Activated CD4-positive, alpha-beta memory T cell treated with anti-CD3 and anti-CD28 coated beads, Interleukin-2, amount 10 ng/mL, durations not matched to agents 7 days and 5 days (primary cell): ENCODE measurements at regions of chr9 and their contacts with region 1.

Region 1: DNA sequence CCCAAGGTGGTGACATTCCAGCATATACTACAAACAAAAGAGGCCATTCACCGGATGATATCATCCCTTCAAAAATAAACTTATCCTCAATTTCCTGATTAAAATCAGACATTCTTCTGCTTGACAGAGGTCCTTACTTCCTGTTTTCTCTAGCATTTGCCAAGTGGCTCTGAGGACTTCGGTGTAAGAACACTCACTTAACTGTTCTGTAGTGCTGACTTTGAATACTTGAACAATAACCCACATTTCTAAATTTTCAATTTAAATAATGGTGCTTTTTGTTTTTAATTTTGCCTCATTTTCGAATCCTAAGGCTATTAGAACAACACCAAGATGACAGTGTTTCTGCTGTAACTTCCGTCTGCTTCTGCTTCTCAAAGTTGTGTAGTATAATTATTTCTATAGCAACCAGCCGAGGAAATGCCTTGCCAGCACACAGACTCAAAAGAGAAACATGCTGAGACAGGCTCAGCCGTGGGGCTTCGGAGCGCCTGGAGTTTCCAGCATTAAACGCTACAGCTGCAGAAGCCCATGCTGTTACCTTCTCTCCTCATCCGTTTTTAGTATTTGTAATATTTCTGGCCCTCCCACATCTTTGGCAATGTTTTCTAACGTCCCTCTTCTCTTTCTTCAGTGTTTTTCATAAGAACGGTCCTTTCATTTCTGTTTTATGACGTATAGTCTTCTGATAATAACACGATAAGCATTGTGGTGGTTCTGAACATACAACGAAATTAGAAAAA is 19.5 kb upstream of the ANXA1 start:
- DNase-seq: peak; percentile 81
- H3K4me3 Mint-ChIP-seq: peak overlapping the region; percentile 80
- H3K27ac Mint-ChIP-seq: peak overlapping the region; percentile 93
- H3K4me1 Mint-ChIP-seq: peaks cover 39% of the 10 kb centered on the region
- H3K27me3 Mint-ChIP-seq: no peaks in the 10 kb centered on the region

Region 2: GRCh38 chr9:73067074-73067473 is 65.1 kb before region 1 on chr9:
- CTCF ChIA-PET with region 1: no interaction called
- POLR2A ChIA-PET with region 1: no interaction called
- DNase-seq: no peak
- H3K4me3 Mint-ChIP-seq: no peak overlapping the region
- H3K27ac Mint-ChIP-seq: no peak overlapping the region
- H3K4me1 Mint-ChIP-seq: no peaks in the 10 kb centered on the region
- H3K27me3 Mint-ChIP-seq: peaks cover 16% of the 10 kb centered on the region

Region 3: DNA sequence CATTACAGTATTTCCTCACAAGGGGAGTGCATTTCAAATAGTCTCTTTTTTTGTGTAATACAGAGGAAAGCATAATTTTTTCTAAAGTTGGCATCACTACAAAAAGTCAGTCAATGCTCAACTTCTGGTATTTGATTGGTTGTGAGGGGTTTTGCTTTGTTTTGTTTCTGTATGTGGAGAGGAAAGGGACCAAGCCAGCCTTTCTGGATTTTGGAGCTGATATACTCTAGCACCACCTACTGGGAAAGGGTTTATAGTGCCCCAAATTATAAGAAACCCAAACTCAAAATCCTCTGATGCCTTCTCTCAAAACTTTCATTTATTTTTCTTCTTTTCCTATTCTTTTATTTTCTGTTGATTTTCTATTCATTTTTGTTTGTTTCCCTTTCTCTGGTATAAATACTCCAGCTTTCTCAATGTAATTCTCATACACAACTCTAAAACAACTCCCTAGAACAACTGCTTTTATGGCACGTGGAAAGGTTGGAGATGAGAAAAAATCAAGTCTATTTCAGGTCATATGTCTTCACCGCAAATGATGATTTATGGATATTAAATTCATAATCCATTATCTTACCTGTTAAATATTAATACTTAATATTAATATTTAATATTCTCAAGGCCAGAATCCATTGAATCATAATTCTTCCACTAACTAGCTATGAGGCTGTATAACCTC is 50.1 kb before region 1 on chr9:
- CTCF ChIA-PET with region 1: no interaction called
- POLR2A ChIA-PET with region 1: no interaction called
- DNase-seq: no peak
- H3K4me3 Mint-ChIP-seq: no peak overlapping the region
- H3K27ac Mint-ChIP-seq: no peak overlapping the region
- H3K4me1 Mint-ChIP-seq: no peaks in the 10 kb centered on the region
- H3K27me3 Mint-ChIP-seq: peaks cover 18% of the 10 kb centered on the region

Region 4: GRCh38 chr9:73149371-73150067 is 17.3 kb after region 1 on chr9:
- CTCF ChIA-PET with region 1: interaction called, 3 read pairs
- POLR2A ChIA-PET with region 1: interaction called, 22 read pairs
- DNase-seq: no peak
- H3K4me3 Mint-ChIP-seq: peak overlapping the region; percentile 24
- H3K27ac Mint-ChIP-seq: peak overlapping the region; percentile 88
- H3K4me1 Mint-ChIP-seq: peaks cover 61% of the 10 kb centered on the region
- H3K27me3 Mint-ChIP-seq: no peaks in the 10 kb centered on the region

Region 5: DNA sequence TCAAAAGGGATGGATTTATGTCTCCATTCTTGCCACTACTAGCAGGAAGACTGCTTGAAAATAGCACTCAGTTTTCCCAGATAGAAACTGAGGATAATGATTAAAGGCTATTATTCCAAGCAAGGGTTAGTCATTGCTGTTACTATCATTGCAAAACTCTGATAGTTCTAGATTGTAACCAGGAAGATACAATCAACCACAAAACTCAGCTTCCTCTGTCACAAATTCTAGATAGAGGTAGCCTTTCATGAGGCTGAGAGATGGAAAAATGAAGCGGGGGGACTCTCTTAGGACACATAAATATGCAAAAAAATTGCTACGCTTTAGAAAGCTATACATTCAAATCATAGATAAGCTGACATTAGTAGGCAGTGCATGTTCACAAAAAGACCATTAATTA is 22.6 kb after region 1 on chr9:
- CTCF ChIA-PET with region 1: interaction called, 3 read pairs
- POLR2A ChIA-PET with region 1: interaction called, 22 read pairs
- DNase-seq: no peak
- H3K4me3 Mint-ChIP-seq: peak overlapping the region; percentile 88
- H3K27ac Mint-ChIP-seq: peak overlapping the region; percentile 90
- H3K4me1 Mint-ChIP-seq: peaks cover 75% of the 10 kb centered on the region
- H3K27me3 Mint-ChIP-seq: no peaks in the 10 kb centered on the region

Region 6: GRCh38 chr9:73284377-73284776 is 152.2 kb after region 1 on chr9:
- CTCF ChIA-PET with region 1: no interaction called
- POLR2A ChIA-PET with region 1: no interaction called
- DNase-seq: no peak
- H3K4me3 Mint-ChIP-seq: no peak overlapping the region
- H3K27ac Mint-ChIP-seq: no peak overlapping the region
- H3K4me1 Mint-ChIP-seq: no peaks in the 10 kb centered on the region
- H3K27me3 Mint-ChIP-seq: no peaks in the 10 kb centered on the region